Transverse colon (tissue), 4 donors: ENCODE measurements at regions of chr22 and their contacts with region 1.

Region 1: DNA sequence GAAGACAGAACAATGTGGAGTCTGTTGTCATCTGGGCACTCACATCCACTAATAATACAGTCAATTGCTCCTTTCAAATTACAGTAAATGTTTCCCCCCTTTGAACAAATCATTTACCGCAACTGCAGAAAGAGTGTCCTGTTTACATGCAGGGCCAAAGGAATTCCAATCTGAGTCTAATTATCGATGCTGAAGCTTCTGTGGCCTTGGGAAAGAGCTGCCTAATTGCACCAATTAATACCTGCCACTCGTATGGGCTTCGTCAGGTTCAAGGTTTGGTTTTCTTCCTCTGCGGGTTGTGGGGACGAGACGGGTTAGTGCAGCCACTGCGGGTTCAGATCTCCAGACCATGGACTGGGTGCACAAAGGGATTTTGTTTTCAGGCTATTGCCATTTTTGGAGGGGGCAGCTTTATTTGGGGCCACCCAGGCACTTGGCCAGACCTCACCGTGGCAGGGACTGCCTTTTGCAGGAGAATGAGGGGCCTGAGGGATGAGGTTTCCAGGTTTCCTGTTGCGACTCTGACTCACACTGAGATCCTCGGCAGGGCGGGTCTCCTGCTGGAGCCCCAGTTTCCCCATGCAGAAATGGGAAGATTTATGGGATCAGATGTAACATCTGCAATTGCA is 147.6 kb downstream of the MIAT start:
- DNase-seq: no peak
- H3K4me3 ChIP-seq: no peak overlapping the region
- H3K27ac ChIP-seq: no peak overlapping the region
- H3K4me1 ChIP-seq: no peaks in the 10 kb centered on the region
- H3K27me3 ChIP-seq: no peaks in the 10 kb centered on the region
- CTCF ChIP-seq: no peak
- EP300 ChIP-seq: no peak
- POLR2A ChIP-seq: no peak

Region 2: DNA sequence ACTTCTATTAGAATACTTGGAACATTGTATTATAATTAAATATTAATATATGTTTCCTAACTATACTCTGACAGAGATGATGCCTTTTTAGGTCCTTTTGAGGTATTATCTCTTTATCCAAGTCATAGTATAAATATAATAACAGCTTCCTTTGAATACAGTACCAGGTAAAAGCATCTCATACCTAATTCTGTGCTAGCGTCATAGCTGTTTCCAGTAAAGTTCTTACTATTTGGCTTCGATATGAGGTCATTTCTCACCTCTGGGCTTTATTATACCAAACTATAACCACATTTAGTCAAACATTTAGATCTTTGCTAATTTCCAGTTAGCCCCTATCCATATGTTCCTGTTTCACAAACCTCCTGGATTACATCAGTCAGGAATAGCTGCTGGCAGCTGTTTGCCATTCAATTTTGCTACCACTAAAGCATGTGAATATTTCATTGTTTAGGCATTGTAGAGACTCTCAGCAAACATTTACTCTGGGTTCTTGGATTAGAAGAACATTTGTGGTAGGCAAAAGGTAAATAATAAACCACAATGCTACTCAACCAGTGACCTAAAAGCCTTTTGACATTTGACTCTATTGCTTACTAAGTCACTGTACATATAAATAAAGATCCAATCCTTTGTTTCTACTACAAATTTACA is 1619.5 kb after region 1 on chr22:
- in situ Hi-C with region 1: no loop called
- intact Hi-C with region 1: loop called (anchors 5 kb)
- DNase-seq: no peak
- H3K4me3 ChIP-seq: no peak overlapping the region
- H3K27ac ChIP-seq: no peak overlapping the region
- H3K4me1 ChIP-seq: peaks cover 0 to 6% (median 0%) of the 10 kb centered on the region in 4 donors
- H3K27me3 ChIP-seq: no peaks in the 10 kb centered on the region
- CTCF ChIP-seq: no peak
- EP300 ChIP-seq: no peak
- POLR2A ChIP-seq: no peak